Uterus (tissue), 4 donors: ENCODE measurements at regions of chr1 and their contacts with region 1.

Region 1: GRCh38 chr1:26999440-26999987 is 6.0 kb downstream of the TRNP1 start:
- DNase-seq: peak; percentile 83 to 91
- H3K4me3 ChIP-seq: no peak overlapping the region
- H3K27ac ChIP-seq: peak overlapping the region; percentile 78 to 86
- H3K4me1 ChIP-seq: peaks cover 4 to 9% of the 10 kb centered on the region in 2 donors
- H3K27me3 ChIP-seq: no peaks in the 10 kb centered on the region
- CTCF ChIP-seq: peak in 1 of 4 experiments; percentile 7
- POLR2A ChIP-seq: peak in 1 of 2 donors; percentile 17

Region 2: DNA sequence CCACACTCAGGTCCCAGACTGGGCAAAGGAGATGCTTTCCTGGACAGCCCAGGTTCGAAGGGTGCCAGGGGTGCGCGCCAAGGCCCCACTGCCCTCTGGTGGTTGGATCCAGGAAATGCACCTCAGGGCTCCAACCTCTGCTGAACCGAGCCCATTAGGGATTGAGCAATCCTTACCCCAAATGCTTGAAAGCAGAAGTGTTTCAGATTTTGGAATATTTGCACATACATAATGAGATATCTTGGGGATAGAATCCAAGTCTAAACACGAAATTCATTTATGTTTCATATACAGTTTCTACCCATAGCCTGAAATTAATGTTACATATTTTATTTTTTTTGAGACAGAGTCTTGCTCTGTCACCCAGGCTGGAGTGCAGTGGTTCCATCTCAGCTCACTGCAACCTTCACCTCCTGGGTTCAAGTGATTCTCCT is 98.0 kb after region 1 on chr1:
- intact Hi-C with region 1: loop called (anchors 5 kb)
- DNase-seq: peak; percentile 82 to 87
- H3K4me3 ChIP-seq: no peak overlapping the region
- H3K27ac ChIP-seq: peak overlapping the region in 1 of 2 donors; percentile 88
- H3K4me1 ChIP-seq: peaks cover 6 to 18% of the 10 kb centered on the region in 2 donors
- H3K27me3 ChIP-seq: no peaks in the 10 kb centered on the region
- CTCF ChIP-seq: peak; percentile 93 to 97 (median 95)
- POLR2A ChIP-seq: no peak

Region 3: GRCh38 chr1:27136998-27137542 is 137.6 kb after region 1 on chr1:
- intact Hi-C with region 1: no loop called
- DNase-seq: no peak
- H3K4me3 ChIP-seq: no peak overlapping the region
- H3K27ac ChIP-seq: peak overlapping the region in 1 of 2 donors; percentile 12
- H3K4me1 ChIP-seq: no peaks in the 10 kb centered on the region
- H3K27me3 ChIP-seq: no peaks in the 10 kb centered on the region
- CTCF ChIP-seq: no peak
- POLR2A ChIP-seq: no peak